AG04450 (cell line): ENCODE measurements at regions of chr4 and their contacts with region 1.

Region 1: GRCh38 chr4:3346146-3346545 is 53.3 kb downstream of the RGS12 start:
- DNase-seq: peak; percentile 44
- H3K4me3 ChIP-seq: no peak overlapping the region
- H3K27ac ChIP-seq: no peak overlapping the region
- H3K27me3 ChIP-seq: no peaks in the 10 kb centered on the region
- CTCF ChIP-seq: peak; percentile 92

Region 2: DNA sequence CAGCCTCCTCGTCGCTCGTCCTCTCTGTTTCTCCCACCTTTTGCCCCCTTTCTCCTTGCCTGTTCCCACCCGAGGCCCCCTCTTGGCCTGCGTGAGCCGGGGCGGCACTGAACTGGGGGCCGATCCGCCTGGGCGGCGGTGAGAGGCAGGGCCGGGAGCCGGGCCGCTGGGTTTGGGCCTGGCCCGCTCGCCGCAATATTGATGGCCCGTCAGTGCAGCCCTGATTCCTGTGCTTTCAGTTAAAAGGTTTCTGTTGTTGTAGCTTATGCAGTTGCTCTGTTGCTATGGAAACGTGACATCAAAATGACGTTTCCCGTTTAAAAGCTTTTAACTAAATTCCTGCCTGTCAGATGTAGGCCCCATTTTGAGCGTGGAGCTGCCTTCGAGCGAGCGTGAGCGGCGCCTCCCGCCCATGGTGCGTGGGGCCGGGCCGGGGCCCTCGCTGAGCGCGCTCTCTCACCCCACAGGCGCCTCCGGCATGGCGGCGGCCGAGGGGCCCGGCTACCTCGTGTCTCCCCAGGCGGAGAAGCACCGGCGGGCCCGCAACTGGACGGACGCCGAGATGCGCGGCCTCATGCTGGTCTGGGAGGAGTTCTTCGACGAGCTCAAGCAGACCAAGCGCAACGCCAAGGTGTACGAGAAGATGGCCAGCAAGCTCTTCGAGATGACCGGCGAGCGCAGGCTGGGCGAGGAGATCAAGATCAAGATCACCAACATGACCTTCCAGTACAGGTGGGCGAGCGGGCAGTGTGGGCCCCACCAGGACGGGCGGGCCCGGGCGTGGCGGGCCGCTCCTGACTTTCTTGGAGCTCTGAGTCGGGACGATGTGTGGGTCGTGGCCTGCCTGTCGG is 97.1 kb before region 1 on chr4 and contains the start of gene MSANTD1:
- CTCF ChIA-PET with region 1: no interaction called
- POLR2A ChIA-PET with region 1: no interaction called
- DNase-seq: peak; percentile 13
- H3K4me3 ChIP-seq: no peak within 1 kb of the TSS
- H3K27ac ChIP-seq: no peak within 1 kb of the TSS
- H3K27me3 ChIP-seq: no peaks in the 10 kb centered on the region
- CTCF ChIP-seq: no peak
- polyA plus RNA-seq, gene MSANTD1: 0.04 and 0.06 TPM in 2 replicates

Region 3: DNA sequence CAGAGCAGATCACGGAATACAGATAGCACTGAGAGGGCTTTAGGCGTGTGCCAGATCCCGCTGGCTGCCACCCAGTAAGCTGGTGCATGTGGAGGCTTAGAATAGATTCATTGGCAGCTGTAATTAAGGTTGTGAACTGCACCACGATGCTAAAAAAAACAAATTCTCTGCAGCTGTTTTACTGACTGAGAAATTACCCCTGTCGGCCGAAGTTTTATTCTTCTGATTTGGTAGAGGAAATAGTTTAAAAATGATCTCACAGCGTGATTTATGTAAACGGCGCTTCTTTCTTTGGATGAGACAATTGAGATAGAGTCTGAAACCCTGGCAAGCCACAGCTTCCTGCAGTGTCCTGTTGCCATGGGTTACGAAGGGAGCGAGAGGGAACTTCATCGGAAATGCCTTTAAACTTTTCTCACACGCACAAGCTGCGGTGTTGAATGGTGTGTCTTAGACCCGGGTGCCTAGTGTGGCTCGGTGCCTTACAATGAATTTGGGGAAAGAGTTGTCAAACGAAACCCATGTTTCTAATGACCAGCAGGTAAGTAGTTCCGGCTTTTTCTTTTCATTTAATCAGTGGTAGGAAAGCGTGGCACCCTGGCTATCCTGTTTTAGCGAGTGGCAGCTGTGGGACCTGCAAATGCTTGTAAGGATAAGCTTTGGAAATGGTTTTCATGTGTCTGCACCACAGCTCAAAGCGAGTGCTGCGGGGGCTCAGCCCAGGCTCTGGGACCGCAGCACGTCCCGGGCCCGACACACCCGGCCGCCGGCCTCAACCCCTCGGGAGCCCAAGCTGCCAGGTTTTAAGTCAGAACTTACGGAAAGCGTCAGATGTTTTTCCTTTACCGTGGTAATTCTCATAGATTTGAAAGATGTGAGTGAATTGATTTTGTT is 23.9 kb after region 1 on chr4:
- CTCF ChIA-PET with region 1: interaction called, 19 read pairs
- POLR2A ChIA-PET with region 1: interaction called, 3 read pairs
- DNase-seq: peak; percentile 57
- H3K4me3 ChIP-seq: peak overlapping the region; percentile 49
- H3K27ac ChIP-seq: peak overlapping the region; percentile 80
- H3K27me3 ChIP-seq: no peaks in the 10 kb centered on the region
- CTCF ChIP-seq: no peak; the same call in 1 of the 2 replicates

Region 4: GRCh38 chr4:3442959-3443749 is 97.0 kb after region 1 on chr4:
- CTCF ChIA-PET with region 1: interaction called, 37 read pairs
- POLR2A ChIA-PET with region 1: no interaction called
- DNase-seq: no peak
- H3K4me3 ChIP-seq: no peak overlapping the region
- H3K27ac ChIP-seq: no peak overlapping the region
- H3K27me3 ChIP-seq: no peaks in the 10 kb centered on the region
- CTCF ChIP-seq: peak; percentile 90